G401 (cell line): ENCODE measurements at regions of chr1 and their contacts with region 1.

Region 1: DNA sequence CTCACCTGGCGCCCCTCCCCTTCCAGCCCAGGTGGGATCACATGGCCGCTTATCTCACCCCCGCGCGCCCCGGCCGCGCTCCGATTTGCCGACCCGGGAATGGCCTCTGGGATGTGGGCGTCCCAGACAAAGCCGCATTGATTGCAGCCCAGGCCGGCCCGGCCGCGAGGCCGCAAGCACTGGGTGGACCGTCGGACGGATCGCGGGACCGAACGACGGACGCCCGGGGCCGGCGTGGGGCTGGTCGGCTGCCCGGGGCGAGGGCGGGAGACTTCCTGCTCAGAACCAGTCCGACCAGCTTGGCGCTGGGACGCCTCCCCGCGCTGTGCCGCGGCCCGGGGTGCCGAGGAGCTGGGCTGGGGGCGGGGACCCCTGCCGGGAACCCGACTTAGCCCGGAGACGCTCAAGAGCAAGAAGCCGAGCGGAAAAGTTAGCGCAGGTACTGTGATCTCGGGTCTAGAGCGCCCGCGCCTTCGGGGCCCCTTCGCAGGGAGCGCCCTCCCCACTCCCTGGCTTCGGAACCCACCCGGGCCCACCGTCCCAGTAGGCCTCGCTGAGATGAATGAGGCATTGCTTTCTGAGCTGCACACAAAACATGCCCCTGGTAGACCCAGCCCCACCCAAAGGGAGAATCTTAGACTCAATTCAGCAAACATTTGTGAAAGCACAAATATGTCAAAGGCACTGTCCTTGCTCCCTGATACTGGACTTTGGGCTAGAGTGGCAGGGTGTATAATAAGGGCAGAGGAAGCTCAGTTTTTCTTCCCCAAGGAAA is 415 bp upstream of the LAD1 start:
- DNase-seq: no peak

Region 2: DNA sequence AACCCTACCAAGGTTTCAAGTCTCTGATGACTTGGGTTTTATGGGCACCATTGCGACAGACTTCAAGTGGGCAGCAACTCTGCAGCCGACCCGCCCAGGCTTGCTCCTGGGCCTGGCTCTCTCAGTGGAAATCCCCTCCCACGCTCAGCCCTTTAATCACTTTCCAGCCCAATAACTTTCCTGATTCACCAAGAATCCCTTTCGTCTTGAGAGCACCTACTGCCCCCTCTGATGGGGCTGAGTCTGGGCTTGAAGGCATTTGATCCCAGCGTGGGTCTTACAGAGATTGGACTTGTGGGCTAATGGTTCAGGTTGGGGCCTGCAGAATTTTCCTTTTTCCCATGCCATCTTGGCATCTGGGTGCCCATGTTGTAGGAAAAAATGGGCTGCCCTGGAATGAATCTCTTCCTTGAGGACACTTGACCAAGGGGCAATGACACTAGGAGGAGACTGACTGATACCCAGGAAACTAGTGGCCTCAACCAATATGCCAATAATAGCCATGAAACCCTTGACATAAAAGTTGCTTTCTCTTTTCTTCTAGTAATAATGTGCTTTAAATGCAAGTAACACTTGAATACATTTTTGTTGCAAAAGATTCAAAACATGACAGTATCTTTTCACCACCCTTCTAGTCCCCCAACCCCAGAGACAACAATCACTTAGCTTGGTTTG is 77.3 kb after region 1 on chr1:
- in situ Hi-C with region 1: loop called (anchors 5 kb)
- DNase-seq: no peak